B cell (primary cell): ENCODE measurements at regions of chr3 and their contacts with region 1.

Region 1: DNA sequence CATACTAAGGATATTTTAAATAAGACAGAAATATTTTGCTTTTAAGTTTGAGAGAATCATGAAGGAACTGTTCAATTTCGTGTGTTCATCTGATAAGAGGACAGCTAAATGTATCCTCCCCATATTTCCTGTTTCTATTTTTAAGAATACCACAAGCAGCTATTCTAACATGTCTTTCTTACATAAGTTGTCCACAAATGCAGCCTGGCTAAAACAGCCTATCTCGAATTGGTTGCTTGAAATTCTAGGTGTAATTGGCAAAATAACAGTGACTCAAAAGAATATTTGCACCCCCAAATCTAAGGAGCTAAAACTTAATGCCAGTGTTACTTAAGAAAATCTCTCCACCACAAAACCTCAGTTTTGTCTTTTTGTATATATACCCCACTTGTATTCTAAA is 35.0 kb downstream of the BTLA start:
- DNase-seq: peak; percentile 60
- ATAC-seq: peak; percentile 76
- H3K4me3 ChIP-seq: peak overlapping the region in 1 of 5 experiments; percentile 53
- H3K4me3 Mint-ChIP-seq: peak overlapping the region; percentile 67
- H3K27ac ChIP-seq: peak overlapping the region; percentile 64 to 80
- H3K27ac Mint-ChIP-seq: peak overlapping the region; percentile 81
- H3K4me1 ChIP-seq: peaks cover 81 to 86% of the 10 kb centered on the region in 2 donors
- H3K4me1 Mint-ChIP-seq: peaks cover 86% of the 10 kb centered on the region
- H3K27me3 ChIP-seq: no peaks in the 10 kb centered on the region
- H3K27me3 Mint-ChIP-seq: no peaks in the 10 kb centered on the region
- CTCF ChIP-seq: no peak

Region 2: DNA sequence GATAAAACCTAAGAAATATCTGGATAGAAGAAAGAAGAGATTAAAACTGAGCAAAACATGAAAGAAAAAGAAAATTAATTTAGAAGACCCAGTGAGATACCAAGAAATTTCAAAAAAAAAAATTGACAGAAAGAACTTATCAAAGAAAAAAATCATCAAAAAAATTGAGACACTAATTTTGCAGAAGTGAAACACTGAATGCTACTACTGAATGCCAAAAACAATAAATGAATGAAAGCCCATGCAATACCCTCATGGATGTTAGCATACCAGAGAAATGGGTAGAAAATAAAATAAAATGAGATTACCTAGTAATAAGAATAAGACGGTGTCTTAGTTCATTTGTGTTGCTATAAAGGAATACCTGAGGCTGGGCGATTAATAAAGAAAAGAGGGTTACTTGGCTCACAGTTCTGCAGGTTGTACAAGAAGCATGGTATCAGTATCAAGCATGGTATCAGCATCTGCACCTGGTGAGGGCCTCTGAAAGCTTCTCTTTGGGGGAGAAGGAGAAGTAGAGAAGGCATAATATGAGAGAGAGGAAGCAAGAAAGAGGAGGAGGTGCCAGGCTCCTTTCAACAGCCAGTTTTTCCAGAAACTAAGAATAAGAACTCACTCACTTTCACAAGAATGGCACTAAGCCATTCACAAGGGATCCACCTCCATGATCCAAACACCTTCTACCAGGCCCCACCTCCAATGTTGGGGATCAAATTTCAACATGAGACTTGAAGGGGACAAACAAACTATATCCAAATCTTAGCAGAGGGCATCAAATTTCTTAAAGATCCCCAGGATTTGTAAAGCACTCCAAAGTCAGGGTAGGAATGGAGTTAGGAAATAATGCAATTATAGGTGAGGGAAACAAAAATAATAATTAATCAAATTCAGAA is 38.2 kb before region 1 on chr3:
- CTCF ChIA-PET with region 1: interaction called, 3 read pairs
- POLR2A ChIA-PET with region 1: no interaction called
- intact Hi-C with region 1: loop called (anchors 5 kb)
- DNase-seq: peak; percentile 55
- ATAC-seq: peak; percentile 77
- H3K4me3 ChIP-seq: no peak overlapping the region
- H3K4me3 Mint-ChIP-seq: peak overlapping the region; percentile 40
- H3K27ac ChIP-seq: peak overlapping the region; percentile 19 to 68
- H3K27ac Mint-ChIP-seq: peak overlapping the region; percentile 77
- H3K4me1 ChIP-seq: peaks cover 20% of the 10 kb centered on the region in 2 donors
- H3K4me1 Mint-ChIP-seq: peaks cover 29% of the 10 kb centered on the region
- H3K27me3 ChIP-seq: no peaks in the 10 kb centered on the region
- H3K27me3 Mint-ChIP-seq: no peaks in the 10 kb centered on the region
- CTCF ChIP-seq: no peak

Region 3: GRCh38 chr3:112446343-112446742 is 17.9 kb before region 1 on chr3:
- CTCF ChIA-PET with region 1: no interaction called
- POLR2A ChIA-PET with region 1: no interaction called
- intact Hi-C with region 1: loop called (anchors 2 kb)
- DNase-seq: no peak
- ATAC-seq: peak; percentile 60
- H3K4me3 ChIP-seq: no peak overlapping the region
- H3K4me3 Mint-ChIP-seq: no peak overlapping the region
- H3K27ac ChIP-seq: no peak overlapping the region
- H3K27ac Mint-ChIP-seq: no peak overlapping the region
- H3K4me1 ChIP-seq: peaks cover 7 to 15% of the 10 kb centered on the region in 2 donors
- H3K4me1 Mint-ChIP-seq: peaks cover 43% of the 10 kb centered on the region
- H3K27me3 ChIP-seq: no peaks in the 10 kb centered on the region
- H3K27me3 Mint-ChIP-seq: no peaks in the 10 kb centered on the region
- CTCF ChIP-seq: no peak

Region 4: GRCh38 chr3:112699436-112699978 is 235.2 kb after region 1 on chr3:
- CTCF ChIA-PET with region 1: no interaction called
- POLR2A ChIA-PET with region 1: no interaction called
- intact Hi-C with region 1: no loop called
- DNase-seq: no peak
- ATAC-seq: no peak
- H3K4me3 ChIP-seq: no peak overlapping the region
- H3K4me3 Mint-ChIP-seq: no peak overlapping the region
- H3K27ac ChIP-seq: no peak overlapping the region
- H3K27ac Mint-ChIP-seq: no peak overlapping the region
- H3K4me1 ChIP-seq: no peaks in the 10 kb centered on the region
- H3K4me1 Mint-ChIP-seq: no peaks in the 10 kb centered on the region
- H3K27me3 ChIP-seq: no peaks in the 10 kb centered on the region
- H3K27me3 Mint-ChIP-seq: peaks cover 25% of the 10 kb centered on the region
- CTCF ChIP-seq: no peak

Region 5: GRCh38 chr3:112734718-112735350 is 270.6 kb after region 1 on chr3:
- CTCF ChIA-PET with region 1: no interaction called
- POLR2A ChIA-PET with region 1: no interaction called
- intact Hi-C with region 1: no loop called
- DNase-seq: peak; percentile 83
- ATAC-seq: peak; percentile 72
- H3K4me3 ChIP-seq: no peak overlapping the region
- H3K4me3 Mint-ChIP-seq: no peak overlapping the region
- H3K27ac ChIP-seq: no peak overlapping the region
- H3K27ac Mint-ChIP-seq: no peak overlapping the region
- H3K4me1 ChIP-seq: peaks cover 14 to 16% of the 10 kb centered on the region in 2 donors
- H3K4me1 Mint-ChIP-seq: peaks cover 30% of the 10 kb centered on the region
- H3K27me3 ChIP-seq: no peaks in the 10 kb centered on the region
- H3K27me3 Mint-ChIP-seq: no peaks in the 10 kb centered on the region
- CTCF ChIP-seq: peak; percentile 90